A549 (cell line): ENCODE measurements at regions of chr7 and their contacts with region 1.

Region 1: GRCh38 chr7:123865517-123866117 is 20.6 kb downstream of the HYAL4 start:
- DNase-seq: peak; percentile 11 to 69
- ATAC-seq: peak; percentile 83 to 97; a peak in 4 of 6 replicates
- H3K4me3 ChIP-seq: no peak overlapping the region
- H3K27ac ChIP-seq: no peak overlapping the region
- H3K4me1 ChIP-seq: no peaks in the 10 kb centered on the region
- CTCF ChIP-seq: peak; percentile 86
- EP300 ChIP-seq: no peak
- POLR2A ChIP-seq: no peak
- RAD21 ChIP-seq: peak; percentile 73 to 74

Region 2: DNA sequence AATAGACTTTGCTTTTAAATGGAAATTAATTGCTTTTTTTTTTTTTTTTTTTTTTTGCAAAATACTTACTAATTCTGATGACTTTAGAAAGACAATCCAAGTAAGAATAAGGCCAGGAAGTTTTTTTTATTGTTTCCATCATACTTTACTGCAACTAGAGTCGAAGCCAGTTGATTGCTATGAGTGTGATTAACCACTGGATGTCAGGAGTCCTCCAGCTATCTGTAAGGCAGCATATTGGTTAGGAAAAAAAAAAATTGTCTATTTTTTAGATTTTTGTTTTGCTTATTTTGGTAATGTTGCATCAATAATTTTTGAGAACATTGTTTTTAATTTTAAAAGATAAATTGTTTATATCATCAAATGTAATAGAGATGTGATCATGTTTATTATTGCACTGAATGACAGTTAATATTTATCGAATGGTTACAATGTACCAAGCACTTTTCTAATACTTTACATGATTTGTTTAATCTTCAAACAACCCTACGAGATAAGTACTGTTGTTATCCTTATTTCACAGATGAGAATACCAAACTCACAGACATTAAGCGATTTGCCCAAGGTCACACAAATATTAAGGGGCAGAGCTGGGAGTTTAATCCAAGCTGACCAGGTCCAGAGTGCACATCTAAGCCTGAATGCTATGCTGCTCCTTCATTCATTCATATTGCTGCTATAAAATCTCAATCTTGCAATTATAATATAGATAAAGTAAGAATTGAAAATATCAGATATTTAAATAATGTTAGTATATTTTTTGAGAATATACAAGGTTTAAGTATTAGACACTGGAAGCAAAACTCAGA is 229.9 kb before region 1 on chr7:
- CTCF ChIA-PET with region 1: interaction called, 39 read pairs
- POLR2A ChIA-PET with region 1: no interaction called
- DNase-seq: peak; percentile 13 to 39
- ATAC-seq: peak; percentile 76 to 87; a peak in 5 of 6 replicates
- H3K4me3 ChIP-seq: no peak overlapping the region
- H3K27ac ChIP-seq: no peak overlapping the region
- H3K4me1 ChIP-seq: no peaks in the 10 kb centered on the region
- CTCF ChIP-seq: peak; percentile 69
- EP300 ChIP-seq: no peak
- POLR2A ChIP-seq: no peak
- RAD21 ChIP-seq: peak; percentile 73 to 83

Region 3: DNA sequence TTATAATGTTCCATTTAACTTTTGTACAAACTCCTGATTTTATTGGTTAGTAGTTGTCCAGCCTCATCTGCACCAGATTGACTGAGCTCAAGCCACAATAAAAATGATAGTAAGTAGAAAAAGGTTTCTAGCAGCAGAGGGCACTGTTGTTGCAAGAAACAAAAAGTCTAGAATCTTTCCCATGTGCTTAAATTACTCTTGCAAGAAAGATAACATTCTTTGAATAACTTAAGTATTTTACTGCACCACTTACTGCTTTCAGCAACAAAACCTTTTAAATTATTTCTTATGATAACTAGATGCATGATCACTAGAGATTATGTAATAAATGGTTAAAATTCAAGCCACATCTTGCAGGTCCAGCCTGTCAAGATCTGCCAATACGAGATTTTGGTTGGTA is 182.9 kb before region 1 on chr7:
- CTCF ChIA-PET with region 1: interaction called, 23 read pairs
- POLR2A ChIA-PET with region 1: no interaction called
- DNase-seq: peak; percentile 19 to 62
- ATAC-seq: peak; percentile 66 to 88
- H3K4me3 ChIP-seq: no peak overlapping the region
- H3K27ac ChIP-seq: no peak overlapping the region
- H3K4me1 ChIP-seq: no peaks in the 10 kb centered on the region
- CTCF ChIP-seq: peak; percentile 80
- EP300 ChIP-seq: no peak
- POLR2A ChIP-seq: no peak
- RAD21 ChIP-seq: peak; percentile 73 to 83

Region 4: DNA sequence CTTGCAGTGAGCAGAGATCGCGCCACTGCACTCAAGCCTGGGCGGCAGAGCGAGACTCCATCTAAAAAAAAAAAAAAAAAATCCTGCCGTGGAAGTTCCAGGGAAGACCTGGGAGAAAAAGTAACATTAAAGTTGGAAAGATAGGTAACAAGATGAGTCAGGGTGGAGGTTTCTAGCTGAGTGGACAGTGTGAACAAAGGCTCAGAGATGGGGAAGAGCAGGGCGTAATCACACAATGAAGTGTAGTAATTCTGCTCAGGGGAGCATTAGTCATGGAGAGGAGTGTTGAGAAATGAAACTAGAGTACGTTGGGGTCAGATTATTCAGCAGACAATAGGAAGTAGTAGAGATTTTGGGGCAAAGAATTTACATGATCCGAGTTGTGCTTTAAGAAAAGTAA is 95.2 kb before region 1 on chr7:
- CTCF ChIA-PET with region 1: interaction called, 27 read pairs
- POLR2A ChIA-PET with region 1: no interaction called
- DNase-seq: peak; percentile 84 to 86
- ATAC-seq: peak; percentile 90 to 96
- H3K4me3 ChIP-seq: peak overlapping the region; percentile 10; the same call in 1 of the 3 replicates
- H3K27ac ChIP-seq: peak overlapping the region; percentile 53 to 80
- H3K4me1 ChIP-seq: peaks cover 60% of the 10 kb centered on the region
- CTCF ChIP-seq: no peak
- EP300 ChIP-seq: peak in 1 of 2 experiments; percentile 32; a peak in 1 of 5 replicates
- POLR2A ChIP-seq: no peak
- RAD21 ChIP-seq: no peak; a peak in 1 of 5 replicates

Region 5: GRCh38 chr7:123797673-123798527 is 67.7 kb before region 1 on chr7:
- CTCF ChIA-PET with region 1: interaction called, 75 read pairs
- POLR2A ChIA-PET with region 1: no interaction called
- DNase-seq: peak; percentile 7 to 54
- ATAC-seq: peak; percentile 66 to 86
- H3K4me3 ChIP-seq: no peak overlapping the region
- H3K27ac ChIP-seq: no peak overlapping the region
- H3K4me1 ChIP-seq: peaks cover 4% of the 10 kb centered on the region; the same call in 1 of the 3 replicates
- CTCF ChIP-seq: peak; percentile 87
- EP300 ChIP-seq: no peak
- POLR2A ChIP-seq: no peak
- RAD21 ChIP-seq: peak; percentile 81 to 89

Region 6: DNA sequence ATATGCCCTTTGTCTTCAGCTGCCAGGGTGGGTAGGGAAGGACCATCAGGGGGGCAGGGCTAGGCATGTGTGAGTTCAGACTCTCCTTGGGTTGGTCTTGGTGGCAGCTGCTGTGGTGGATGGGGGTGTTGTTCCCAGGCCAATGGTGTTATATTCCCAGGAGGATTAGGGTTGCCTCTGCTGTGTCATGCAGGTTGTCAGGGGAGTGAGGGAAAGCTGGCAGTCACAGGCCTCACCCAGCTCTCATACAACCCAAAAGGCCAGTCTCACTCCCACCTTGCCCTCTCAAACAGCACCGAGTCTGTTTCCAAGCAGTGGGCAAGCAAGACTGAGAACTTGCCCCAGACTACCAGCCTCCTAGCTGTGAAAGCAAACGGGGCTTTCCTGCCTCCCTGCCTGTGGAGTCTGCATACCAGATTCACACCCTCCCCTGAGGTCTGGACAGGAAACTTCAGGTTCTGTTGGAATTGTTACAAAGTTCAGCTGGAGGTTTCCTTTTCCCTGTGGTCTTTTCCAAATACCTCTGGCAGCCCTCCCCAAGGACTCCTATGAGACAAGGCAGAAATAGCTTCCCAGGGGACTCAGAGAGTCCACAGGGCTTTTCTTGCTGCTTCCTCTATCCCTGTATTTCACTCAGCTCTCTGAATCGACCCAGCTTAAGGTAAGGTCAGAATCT is 19.3 kb before region 1 on chr7:
- CTCF ChIA-PET with region 1: interaction called, 19 read pairs
- POLR2A ChIA-PET with region 1: no interaction called
- DNase-seq: peak in 1 of 2 experiments; percentile 33
- ATAC-seq: peak; percentile 68 to 84; a peak in 4 of 6 replicates
- H3K4me3 ChIP-seq: no peak overlapping the region
- H3K27ac ChIP-seq: no peak overlapping the region
- H3K4me1 ChIP-seq: 0 out of 3 replicates have a peak, but pooled peaks cover 5% of the 10 kb centered on the region
- CTCF ChIP-seq: no peak
- EP300 ChIP-seq: no peak
- POLR2A ChIP-seq: no peak
- RAD21 ChIP-seq: no peak